ENCODE measurements at regions of chr19 and their contacts with region 1.

Region 1: DNA sequence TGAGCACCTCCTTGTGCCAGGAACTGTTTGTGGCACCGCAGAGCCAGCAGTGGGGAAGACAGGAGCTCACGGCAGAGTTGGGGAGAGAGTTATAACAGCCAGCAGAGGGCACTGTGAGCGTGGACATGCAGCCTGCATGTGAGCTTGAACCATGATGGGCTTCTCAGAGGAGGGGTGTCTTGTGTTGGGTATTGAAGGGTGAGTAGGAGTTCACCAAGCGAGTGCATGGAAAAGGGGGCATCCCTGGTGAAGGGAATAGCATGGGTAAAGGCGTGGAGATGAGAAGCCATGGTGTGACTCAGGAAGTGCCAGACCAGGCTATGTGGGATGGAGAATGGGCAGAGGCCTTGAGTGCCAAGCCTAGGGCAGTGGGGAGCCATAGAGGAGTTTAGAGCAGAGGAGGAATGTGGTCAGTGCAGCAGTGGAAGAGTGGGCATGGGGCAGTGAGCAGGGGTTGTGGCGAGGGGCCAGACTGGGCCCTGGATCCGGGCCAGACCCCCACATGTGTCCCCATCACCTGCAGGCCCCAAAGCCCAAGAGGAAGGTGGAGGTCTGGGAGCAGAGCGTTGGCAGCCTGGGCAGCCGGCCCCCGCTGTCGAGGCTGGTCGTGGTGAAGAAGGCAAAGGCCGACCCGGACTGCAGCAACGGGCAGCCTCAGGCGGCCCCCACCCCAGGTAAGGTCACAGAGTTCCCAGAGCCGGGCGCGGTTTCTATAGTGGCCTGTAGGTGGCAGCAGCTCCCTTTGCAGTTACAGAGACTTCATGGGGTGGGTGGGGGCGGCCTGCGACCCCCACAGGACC is 11.8 kb upstream of the SHD start:
- DNase-seq: peak; percentile 67
- H3K4me3 ChIP-seq: no peak overlapping the region
- H3K27ac ChIP-seq: peak overlapping the region; percentile 58
- H3K4me1 ChIP-seq: no peaks in the 10 kb centered on the region
- H3K27me3 ChIP-seq: no peaks in the 10 kb centered on the region
- CTCF ChIP-seq: peak; percentile 82

Region 2: DNA sequence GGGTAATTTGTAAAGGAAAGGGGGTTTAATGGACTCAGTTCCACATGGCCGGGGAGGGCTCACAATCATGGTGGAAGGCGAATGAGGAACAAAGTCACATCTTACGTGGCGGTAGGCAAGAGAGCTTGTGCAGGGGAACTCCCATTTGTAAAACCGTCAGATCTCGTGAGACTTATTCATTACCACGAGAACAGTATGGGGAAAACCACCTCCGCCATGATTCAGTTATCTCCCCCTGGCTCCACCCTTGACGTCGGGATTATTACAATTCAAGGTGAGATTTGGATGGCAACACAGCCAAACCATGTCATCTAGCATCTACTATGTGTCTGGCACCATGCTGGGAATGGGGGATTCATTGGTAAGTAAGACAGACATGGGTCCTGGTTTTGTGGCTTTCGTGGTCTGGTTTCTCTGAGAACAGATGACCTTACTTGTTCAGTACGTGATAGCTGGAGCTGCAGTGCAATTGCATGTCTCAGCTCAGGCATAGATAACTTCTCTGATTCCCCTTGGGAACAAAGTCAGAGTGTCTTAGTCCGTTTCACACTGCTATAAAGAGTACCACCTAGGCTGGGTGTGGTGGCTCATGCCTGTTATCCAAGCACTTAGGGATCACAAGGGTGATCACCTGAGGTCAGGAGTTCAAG is 1439.3 kb before region 1 on chr19:
- intact Hi-C with region 1: no loop called
- DNase-seq: no peak
- H3K4me3 ChIP-seq: no peak overlapping the region
- H3K27ac ChIP-seq: no peak overlapping the region
- H3K4me1 ChIP-seq: no peaks in the 10 kb centered on the region
- H3K27me3 ChIP-seq: no peaks in the 10 kb centered on the region
- CTCF ChIP-seq: no peak

Region 3: GRCh38 chr19:4232958-4233853 is 34.1 kb before region 1 on chr19:
- intact Hi-C with region 1: no loop called
- DNase-seq: peak; percentile 53
- H3K4me3 ChIP-seq: no peak overlapping the region
- H3K27ac ChIP-seq: no peak overlapping the region
- H3K4me1 ChIP-seq: no peaks in the 10 kb centered on the region
- H3K27me3 ChIP-seq: peaks cover 6% of the 10 kb centered on the region
- CTCF ChIP-seq: peak; percentile 40

Region 4: DNA sequence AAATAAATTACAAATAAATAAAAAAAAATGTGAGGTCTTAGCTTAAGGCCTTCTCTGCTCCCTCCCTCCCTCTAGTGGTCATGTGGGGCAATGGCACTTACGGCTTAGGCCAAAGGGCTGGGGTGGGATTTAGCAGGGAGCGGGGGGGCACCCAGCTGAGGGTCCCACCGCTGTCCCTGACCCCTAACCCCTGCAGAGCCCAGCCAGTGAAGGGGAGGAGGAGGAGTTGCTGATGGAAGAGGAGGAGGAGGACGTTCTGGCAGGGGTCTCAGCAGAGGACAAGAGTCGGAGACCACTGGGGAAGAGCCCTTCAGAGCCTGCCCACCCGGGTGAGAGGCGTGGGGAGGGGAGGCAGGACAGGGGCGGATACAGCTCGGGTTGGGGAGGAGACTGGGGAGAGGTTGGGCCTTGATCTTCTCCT is 85.4 kb after region 1 on chr19:
- intact Hi-C with region 1: loop called (anchors 5 kb)
- DNase-seq: no peak
- H3K4me3 ChIP-seq: no peak overlapping the region
- H3K27ac ChIP-seq: no peak overlapping the region
- H3K4me1 ChIP-seq: no peaks in the 10 kb centered on the region
- H3K27me3 ChIP-seq: no peaks in the 10 kb centered on the region
- CTCF ChIP-seq: peak; percentile 93

Region 5: GRCh38 chr19:4400135-4400936 is 133.0 kb after region 1 on chr19 and contains the start of gene SH3GL1:
- intact Hi-C with region 1: loop called (anchors 2 kb)
- DNase-seq: peak; percentile 92
- H3K4me3 ChIP-seq: peak within 1 kb of the TSS; percentile 96
- H3K27ac ChIP-seq: peak within 1 kb of the TSS; percentile 92
- H3K4me1 ChIP-seq: peaks cover 13% of the 10 kb centered on the region
- H3K27me3 ChIP-seq: no peaks in the 10 kb centered on the region
- CTCF ChIP-seq: peak; percentile 70
- total RNA-seq, gene SH3GL1: 54.0 to 66.6 TPM

Measured in colonic mucosa (tissue), 4 donors.